ENCODE measurements at regions of chr11 and their contacts with region 1.

Region 1: DNA sequence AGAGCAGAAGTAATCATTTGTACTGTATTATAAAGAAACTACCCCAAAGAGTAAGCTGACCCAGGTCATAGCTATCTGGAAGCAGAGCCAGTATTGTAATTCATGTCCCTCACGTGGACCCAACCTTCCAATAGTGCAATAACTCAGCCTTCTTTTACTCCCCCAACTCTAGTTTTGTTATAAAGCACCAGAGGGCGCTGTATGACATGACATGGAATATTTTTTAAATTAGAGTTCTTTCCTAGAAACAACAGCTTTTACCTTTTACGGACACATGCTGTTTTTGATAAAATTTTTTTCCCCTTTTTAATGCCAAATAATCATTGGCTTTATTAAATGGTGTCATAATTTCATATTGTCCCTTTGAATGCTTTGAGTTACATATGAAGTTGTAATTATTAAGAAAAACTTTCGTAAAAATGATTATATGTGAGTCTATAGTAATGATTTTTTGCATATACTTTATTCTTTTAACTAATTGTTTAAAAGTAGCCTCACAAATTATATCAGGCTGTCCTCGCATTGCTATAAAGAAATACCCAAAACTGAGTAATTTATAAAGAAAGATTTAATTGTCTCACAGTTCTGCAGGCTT is 76.9 kb downstream of the DKK3 start:
- DNase-seq: peak; percentile 87
- H3K4me3 ChIP-seq: no peak overlapping the region
- H3K27ac ChIP-seq: no peak overlapping the region
- H3K4me1 ChIP-seq: peaks cover 9% of the 10 kb centered on the region
- H3K27me3 ChIP-seq: no peaks in the 10 kb centered on the region

Region 2: GRCh38 chr11:12029738-12030363 is 98.3 kb after region 1 on chr11:
- in situ Hi-C with region 1: loop called (anchors 10 kb)
- DNase-seq: peak; percentile 64
- H3K4me3 ChIP-seq: no peak overlapping the region
- H3K27ac ChIP-seq: 0 out of 2 replicates have a peak overlapping the region, but pooled peaks have one; percentile 9
- H3K4me1 ChIP-seq: peaks cover 10% of the 10 kb centered on the region
- H3K27me3 ChIP-seq: no peaks in the 10 kb centered on the region

Region 3: DNA sequence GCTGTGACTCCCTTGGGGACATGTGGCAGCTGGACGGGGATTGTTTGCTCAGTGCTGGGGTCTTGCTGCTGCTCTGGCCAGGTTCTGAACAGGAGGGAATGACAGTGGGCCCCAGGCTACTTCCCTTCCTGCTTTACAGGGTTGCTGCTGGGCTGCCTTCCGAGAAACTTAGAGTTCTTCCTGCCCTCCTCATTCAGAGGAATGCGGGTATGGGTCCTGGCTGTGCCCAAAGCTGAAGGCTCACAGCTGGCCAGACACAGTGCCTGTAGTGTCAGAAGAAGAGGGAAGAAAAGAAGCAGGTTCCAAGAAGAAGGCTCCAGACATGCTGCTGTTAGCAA is 337.5 kb after region 1 on chr11:
- in situ Hi-C with region 1: loop called (anchors 25 kb)
- DNase-seq: peak; percentile 78
- H3K4me3 ChIP-seq: no peak overlapping the region
- H3K27ac ChIP-seq: peak overlapping the region; percentile 24; the same call in 1 of the 2 replicates
- H3K4me1 ChIP-seq: peaks cover 20% of the 10 kb centered on the region
- H3K27me3 ChIP-seq: no peaks in the 10 kb centered on the region